Natural killer cell (primary cell): ENCODE measurements at regions of chr4 and their contacts with region 1.

Region 1: GRCh38 chr4:140523857-140524742 is at the start of gene ELMOD2:
- DNase-seq: peak; percentile 96 to 98
- ATAC-seq: peak; percentile 99 to 100 (median 99)
- H3K4me3 ChIP-seq: peak within 1 kb of the TSS; percentile 56
- H3K4me3 Mint-ChIP-seq: peak within 1 kb of the TSS; percentile 89
- H3K27ac ChIP-seq: peak within 1 kb of the TSS; percentile 60
- H3K27ac Mint-ChIP-seq: peak within 1 kb of the TSS; percentile 78 to 88
- H3K4me1 ChIP-seq: peaks cover 3% of the 10 kb centered on the region
- H3K4me1 Mint-ChIP-seq: peaks cover 12 to 22% of the 10 kb centered on the region in 2 donors
- H3K27me3 ChIP-seq: no peaks in the 10 kb centered on the region
- H3K27me3 Mint-ChIP-seq: no peaks in the 10 kb centered on the region
- CTCF ChIP-seq: peak; percentile 97
- total RNA-seq, gene ELMOD2: 17.9 to 22.6 (median 18.4) TPM

Region 2: DNA sequence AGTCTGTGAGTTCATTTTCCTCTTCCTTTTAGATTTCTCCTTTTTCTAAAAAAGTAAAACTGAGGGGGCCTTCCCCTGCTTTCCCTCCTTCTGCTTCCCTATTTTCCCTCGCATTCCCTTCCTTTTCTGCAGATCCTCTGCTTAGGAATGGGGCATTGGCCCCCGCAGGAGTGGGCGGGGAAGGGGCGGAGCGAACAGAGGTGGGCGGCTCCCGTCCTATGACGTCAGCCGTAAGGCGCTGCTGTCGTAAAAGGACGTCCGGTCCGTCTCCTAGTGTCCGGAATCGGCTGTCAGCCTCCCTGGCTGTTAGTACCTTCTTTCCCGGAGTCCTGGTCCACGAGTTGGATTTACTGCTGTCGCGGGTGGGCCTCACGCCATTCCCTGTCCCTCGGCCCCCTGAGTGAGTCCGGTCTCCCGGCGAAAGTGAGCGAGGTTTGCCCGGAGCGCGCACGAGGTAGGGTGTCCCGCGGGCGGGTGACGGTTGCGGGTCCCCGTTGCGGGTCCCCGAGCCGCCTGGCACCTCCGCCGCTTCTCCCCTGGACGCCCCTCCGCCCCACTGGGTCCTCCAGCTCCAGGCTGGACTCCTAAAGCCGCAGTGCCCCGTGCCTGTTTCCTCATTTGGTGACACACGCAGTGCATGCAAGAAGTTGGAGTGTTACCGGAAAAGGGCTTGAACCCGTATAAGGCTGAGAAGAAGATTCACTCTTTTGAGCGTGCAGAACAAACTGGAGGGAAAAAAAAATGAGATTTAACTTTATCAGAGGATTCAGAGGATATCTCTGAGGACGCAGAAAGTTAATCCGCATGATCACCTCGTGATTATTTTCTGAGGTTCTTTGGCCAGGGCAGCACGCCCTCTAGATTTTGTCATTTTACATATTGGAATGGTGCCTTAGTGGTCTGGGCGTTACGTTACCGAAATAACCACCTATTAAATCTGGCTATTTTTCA is 696.8 kb after region 1 on chr4 and contains the start of gene ZNF330:
- intact Hi-C with region 1: loop called (anchors 10 kb)
- DNase-seq: peak; percentile 93 to 94
- ATAC-seq: peak; percentile 89 to 95 (median 91)
- H3K4me3 ChIP-seq: peak within 1 kb of the TSS; percentile 64
- H3K4me3 Mint-ChIP-seq: peak within 1 kb of the TSS; percentile 98
- H3K27ac ChIP-seq: peak within 1 kb of the TSS; percentile 75
- H3K27ac Mint-ChIP-seq: peak within 1 kb of the TSS; percentile 92 to 93
- H3K4me1 ChIP-seq: peaks cover 8% of the 10 kb centered on the region
- H3K4me1 Mint-ChIP-seq: peaks cover 27 to 40% of the 10 kb centered on the region in 2 donors
- H3K27me3 ChIP-seq: no peaks in the 10 kb centered on the region
- H3K27me3 Mint-ChIP-seq: peaks cover 6 to 18% of the 10 kb centered on the region in 2 donors
- CTCF ChIP-seq: no peak
- total RNA-seq, gene ZNF330: 25.3 to 34.8 (median 34.7) TPM